ENCODE measurements at regions of chr11 and their contacts with region 1.

Region 1: GRCh38 chr11:57567515-57568329 is at the start of gene UBE2L6:
- DNase-seq: peak; percentile 79
- CTCF ChIP-seq: peak; percentile 91

Region 2: GRCh38 chr11:57546869-57547475 is 20.8 kb before region 1 on chr11:
- CTCF ChIA-PET with region 1: interaction called, 19 read pairs
- POLR2A ChIA-PET with region 1: interaction called, 4 read pairs
- DNase-seq: peak; percentile 73
- CTCF ChIP-seq: no peak

Region 3: GRCh38 chr11:57584341-57584740 is 16.6 kb after region 1 on chr11:
- CTCF ChIA-PET with region 1: interaction called, 18 read pairs
- POLR2A ChIA-PET with region 1: no interaction called
- DNase-seq: no peak
- CTCF ChIP-seq: no peak

Region 4: GRCh38 chr11:57651408-57651807 is 83.7 kb after region 1 on chr11:
- CTCF ChIA-PET with region 1: interaction called, 295 read pairs
- POLR2A ChIA-PET with region 1: no interaction called
- DNase-seq: no peak
- CTCF ChIP-seq: no peak

Region 5: GRCh38 chr11:57903564-57904123 is 335.9 kb after region 1 on chr11:
- CTCF ChIA-PET with region 1: no interaction called
- POLR2A ChIA-PET with region 1: no interaction called
- DNase-seq: no peak
- CTCF ChIP-seq: no peak

Region 6: GRCh38 chr11:57941875-57942274 is 374.2 kb after region 1 on chr11:
- CTCF ChIA-PET with region 1: no interaction called
- POLR2A ChIA-PET with region 1: no interaction called
- DNase-seq: no peak
- CTCF ChIP-seq: no peak

Region 7: GRCh38 chr11:58513747-58514367 is 946.1 kb after region 1 on chr11:
- CTCF ChIA-PET with region 1: interaction called, 10 read pairs
- POLR2A ChIA-PET with region 1: no interaction called
- DNase-seq: peak; percentile 22
- CTCF ChIP-seq: peak; percentile 68

Measured in GM10248 (cell line).